Ovary (tissue), 10 donors: ENCODE measurements at regions of chr4 and their contacts with region 1.

Region 1: DNA sequence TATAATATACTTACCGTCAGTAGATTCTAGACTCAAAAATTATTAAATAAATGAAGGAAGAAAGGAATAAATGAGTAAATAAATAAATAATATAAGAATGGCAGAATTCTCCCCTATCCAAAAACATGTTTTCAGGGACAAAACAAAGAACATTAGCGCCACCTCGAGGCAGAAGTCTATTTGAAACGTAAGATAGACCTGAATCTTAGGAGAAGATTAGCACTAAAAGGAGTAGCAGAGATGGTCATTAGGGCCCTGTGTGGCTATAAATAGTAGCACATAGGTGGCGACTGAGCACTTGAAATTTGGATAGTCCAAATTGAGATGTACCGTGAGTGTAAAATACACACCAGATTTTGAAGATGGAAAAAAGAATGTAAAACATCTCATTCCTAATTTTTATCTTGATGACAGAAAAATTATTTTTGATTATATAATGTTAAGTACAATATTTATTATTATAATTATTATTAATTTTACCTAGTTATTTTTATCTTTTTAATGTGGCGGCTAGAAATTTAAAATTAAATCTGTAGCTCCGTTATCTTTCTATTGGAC is 24.3 kb upstream of the SRD5A3 start:
- DNase-seq: peak; percentile 44 to 80 (median 59)
- H3K4me3 ChIP-seq: no peak overlapping the region
- H3K27ac ChIP-seq: no peak overlapping the region
- H3K4me1 ChIP-seq: no peaks in the 10 kb centered on the region
- H3K27me3 ChIP-seq: no peaks in the 10 kb centered on the region
- CTCF ChIP-seq: peak in 2 of 3 donors; percentile 33 to 58
- EP300 ChIP-seq: no peak
- POLR2A ChIP-seq: no peak

Region 2: DNA sequence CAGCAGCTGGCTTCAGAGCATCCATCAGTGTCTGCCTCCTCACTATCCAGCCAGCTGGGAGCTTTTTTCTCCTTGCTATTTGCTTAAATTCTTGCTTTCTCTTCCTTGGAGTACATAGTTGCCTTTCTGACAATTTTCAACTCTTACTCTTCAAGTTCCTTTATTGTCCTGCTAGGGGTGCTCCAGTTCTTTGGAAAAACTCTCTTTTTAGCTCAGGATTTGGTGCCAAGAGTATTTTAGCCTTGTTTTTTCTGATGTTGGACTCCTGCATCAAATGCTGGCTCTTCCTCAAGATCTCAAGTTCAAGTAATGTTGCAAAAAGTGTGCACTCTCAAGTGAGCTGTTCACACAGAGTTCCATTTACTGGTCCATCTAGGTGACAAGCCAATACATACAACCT is 322.8 kb before region 1 on chr4:
- intact Hi-C with region 1: loop called in 1 of 4 experiments (anchors 10 kb)
- DNase-seq: no peak
- H3K4me3 ChIP-seq: no peak overlapping the region
- H3K27ac ChIP-seq: no peak overlapping the region
- H3K4me1 ChIP-seq: no peaks in the 10 kb centered on the region
- H3K27me3 ChIP-seq: no peaks in the 10 kb centered on the region
- CTCF ChIP-seq: peak in 2 of 3 donors; percentile 19 to 34
- EP300 ChIP-seq: no peak
- POLR2A ChIP-seq: no peak

Region 3: DNA sequence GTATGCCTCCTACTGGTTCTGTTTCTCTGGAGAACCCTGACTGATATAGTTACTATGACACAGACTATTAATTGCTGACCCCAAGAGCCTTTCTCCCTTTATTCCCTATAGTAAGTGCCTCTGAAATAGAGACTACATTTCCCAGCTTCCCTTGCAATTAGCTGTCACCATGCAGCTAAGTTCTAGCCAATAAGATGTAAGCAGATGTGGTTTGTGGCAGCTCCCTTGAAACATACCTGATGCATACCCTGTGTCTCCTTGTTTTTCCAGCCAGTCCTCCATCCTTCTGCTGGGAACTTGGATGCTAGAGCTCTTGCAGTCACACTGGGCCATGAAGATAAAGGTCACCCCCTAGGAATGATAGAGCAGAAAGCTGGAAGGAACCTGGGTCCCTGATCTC is 64.3 kb after region 1 on chr4:
- intact Hi-C with region 1: no loop called
- DNase-seq: no peak
- H3K4me3 ChIP-seq: no peak overlapping the region
- H3K27ac ChIP-seq: no peak overlapping the region
- H3K4me1 ChIP-seq: no peaks in the 10 kb centered on the region
- H3K27me3 ChIP-seq: no peaks in the 10 kb centered on the region
- CTCF ChIP-seq: no peak
- EP300 ChIP-seq: no peak
- POLR2A ChIP-seq: no peak

Region 4: DNA sequence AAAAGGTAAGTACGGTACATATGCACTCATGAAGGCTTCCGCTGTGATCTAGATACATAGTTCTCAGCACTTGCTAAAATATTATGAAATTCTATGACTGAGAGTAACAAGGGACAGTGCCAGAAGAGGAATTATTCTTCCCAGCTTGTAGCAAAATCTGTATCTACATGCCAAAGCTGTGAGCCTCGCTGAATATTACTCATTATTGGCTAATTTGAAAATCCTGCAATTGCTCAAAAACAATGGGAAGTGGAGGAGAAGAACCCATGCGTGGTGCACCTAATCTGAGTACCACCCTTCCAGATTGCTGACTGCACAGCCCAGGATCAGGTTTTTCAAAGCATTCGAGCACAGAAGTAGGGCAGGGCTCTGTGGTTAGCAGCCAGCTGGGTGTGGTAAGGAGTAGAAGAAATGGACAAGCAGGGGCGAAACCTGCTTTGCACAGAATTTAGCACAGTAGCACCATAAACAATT is 287.6 kb after region 1 on chr4:
- intact Hi-C with region 1: no loop called
- DNase-seq: no peak
- H3K4me3 ChIP-seq: no peak overlapping the region
- H3K27ac ChIP-seq: no peak overlapping the region
- H3K4me1 ChIP-seq: no peaks in the 10 kb centered on the region
- H3K27me3 ChIP-seq: no peaks in the 10 kb centered on the region
- CTCF ChIP-seq: no peak
- EP300 ChIP-seq: no peak
- POLR2A ChIP-seq: no peak